B cell (primary cell): ENCODE measurements at regions of chr12 and their contacts with region 1.

Region 1: DNA sequence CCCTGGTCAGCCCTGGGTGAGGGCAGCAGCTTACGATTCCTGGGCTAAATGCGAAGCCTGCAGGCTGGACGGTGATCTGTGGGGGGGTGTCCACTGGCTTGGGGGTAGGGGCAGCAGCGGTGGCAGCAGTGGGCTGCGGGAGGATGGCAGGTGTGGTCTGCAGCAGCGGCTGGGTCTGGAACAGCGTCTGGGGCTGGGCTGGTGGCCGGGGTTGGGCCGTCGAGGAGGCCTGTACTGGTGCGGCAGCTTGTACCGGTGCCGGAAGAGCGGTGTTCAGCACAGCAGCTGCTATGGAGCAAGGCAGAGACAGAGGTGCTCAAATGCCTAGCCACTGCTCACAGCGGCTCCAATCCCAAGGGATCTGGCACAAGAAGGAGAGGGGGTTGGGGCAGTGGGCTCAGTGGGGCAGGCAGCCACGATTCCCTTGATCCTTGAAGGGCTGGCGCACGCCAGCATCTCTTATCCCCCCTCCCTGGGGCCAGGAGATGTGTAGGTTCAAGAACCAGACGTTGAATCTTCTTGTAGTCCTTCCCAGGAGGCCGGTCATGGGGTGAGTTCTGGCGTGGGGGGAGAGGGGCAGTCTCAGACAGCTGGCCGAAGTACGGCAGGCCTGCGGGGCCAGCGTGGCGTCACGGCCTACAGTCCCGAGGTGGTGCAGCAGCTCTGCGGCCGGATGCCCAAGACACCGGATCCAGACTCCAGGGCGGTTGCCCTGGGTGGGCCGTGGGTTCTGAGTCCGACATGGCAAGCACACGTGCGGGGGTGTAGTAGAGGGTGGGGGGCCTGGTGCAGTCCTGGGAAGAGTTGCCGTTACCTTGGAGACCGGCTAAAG is 19.9 kb downstream of the POU6F1 start:
- DNase-seq: no peak
- ATAC-seq: no peak
- H3K4me3 ChIP-seq: no peak overlapping the region
- H3K4me3 Mint-ChIP-seq: no peak overlapping the region
- H3K27ac ChIP-seq: no peak overlapping the region
- H3K27ac Mint-ChIP-seq: no peak overlapping the region
- H3K4me1 ChIP-seq: no peaks in the 10 kb centered on the region
- H3K4me1 Mint-ChIP-seq: no peaks in the 10 kb centered on the region
- H3K27me3 ChIP-seq: no peaks in the 10 kb centered on the region
- H3K27me3 Mint-ChIP-seq: no peaks in the 10 kb centered on the region
- CTCF ChIP-seq: no peak

Region 2: GRCh38 chr12:51281202-51281924 is 83.4 kb after region 1 on chr12:
- CTCF ChIA-PET with region 1: no interaction called
- POLR2A ChIA-PET with region 1: interaction called, 15 read pairs
- intact Hi-C with region 1: no loop called
- DNase-seq: no peak
- ATAC-seq: no peak
- H3K4me3 ChIP-seq: no peak overlapping the region
- H3K4me3 Mint-ChIP-seq: no peak overlapping the region
- H3K27ac ChIP-seq: no peak overlapping the region
- H3K27ac Mint-ChIP-seq: no peak overlapping the region
- H3K4me1 ChIP-seq: no peaks in the 10 kb centered on the region
- H3K4me1 Mint-ChIP-seq: peaks cover 9% of the 10 kb centered on the region
- H3K27me3 ChIP-seq: no peaks in the 10 kb centered on the region
- H3K27me3 Mint-ChIP-seq: no peaks in the 10 kb centered on the region
- CTCF ChIP-seq: no peak